Ovary (tissue), 10 donors: ENCODE measurements at regions of chr4 and their contacts with region 1.

Region 1: DNA sequence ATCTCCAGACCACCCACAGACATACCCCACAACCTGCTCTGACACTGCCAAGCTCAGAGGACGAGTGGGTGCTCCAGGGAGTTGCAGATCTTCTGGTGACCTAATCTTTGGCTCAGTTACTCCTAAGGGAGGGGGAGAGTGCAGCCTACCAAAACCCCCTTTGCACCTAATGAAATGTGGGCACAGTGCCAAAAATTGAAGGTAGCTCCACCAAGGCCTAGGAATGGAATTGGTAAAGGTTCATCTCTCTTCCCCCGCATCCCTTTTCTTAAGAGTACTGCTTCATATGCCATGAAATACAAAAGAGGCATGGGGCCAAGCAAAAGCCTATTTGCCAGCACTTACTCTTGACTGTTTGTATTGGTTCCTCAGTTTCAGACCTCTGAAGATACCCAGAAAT is 491.0 kb downstream of the NAF1 start:
- DNase-seq: no peak
- H3K4me3 ChIP-seq: no peak overlapping the region
- H3K27ac ChIP-seq: no peak overlapping the region
- H3K4me1 ChIP-seq: no peaks in the 10 kb centered on the region
- H3K27me3 ChIP-seq: no peaks in the 10 kb centered on the region
- CTCF ChIP-seq: no peak
- EP300 ChIP-seq: no peak
- POLR2A ChIP-seq: no peak

Region 2: DNA sequence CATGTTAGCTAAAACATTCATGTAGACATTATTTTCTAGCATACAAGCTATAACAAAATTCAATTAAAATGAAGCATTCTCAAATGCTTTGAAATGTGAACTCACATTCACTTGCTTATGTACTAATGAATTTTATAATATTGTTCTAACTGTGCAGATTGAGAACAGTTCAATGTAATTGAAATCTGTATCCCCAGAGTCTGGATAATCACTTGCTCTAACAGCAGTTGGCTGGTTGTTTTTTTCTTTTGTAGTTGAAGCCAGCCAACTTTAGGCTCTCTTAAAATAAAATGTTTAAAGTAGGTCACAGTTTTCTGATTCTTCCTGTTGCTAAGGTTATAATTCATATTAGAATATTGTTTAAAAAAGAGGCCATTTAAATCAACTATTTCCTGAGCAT is 52.1 kb after region 1 on chr4:
- intact Hi-C with region 1: loop called in 1 of 4 experiments (anchors 2 kb)
- DNase-seq: no peak
- H3K4me3 ChIP-seq: no peak overlapping the region
- H3K27ac ChIP-seq: no peak overlapping the region
- H3K4me1 ChIP-seq: no peaks in the 10 kb centered on the region
- H3K27me3 ChIP-seq: no peaks in the 10 kb centered on the region
- CTCF ChIP-seq: no peak
- EP300 ChIP-seq: no peak
- POLR2A ChIP-seq: no peak

Region 3: DNA sequence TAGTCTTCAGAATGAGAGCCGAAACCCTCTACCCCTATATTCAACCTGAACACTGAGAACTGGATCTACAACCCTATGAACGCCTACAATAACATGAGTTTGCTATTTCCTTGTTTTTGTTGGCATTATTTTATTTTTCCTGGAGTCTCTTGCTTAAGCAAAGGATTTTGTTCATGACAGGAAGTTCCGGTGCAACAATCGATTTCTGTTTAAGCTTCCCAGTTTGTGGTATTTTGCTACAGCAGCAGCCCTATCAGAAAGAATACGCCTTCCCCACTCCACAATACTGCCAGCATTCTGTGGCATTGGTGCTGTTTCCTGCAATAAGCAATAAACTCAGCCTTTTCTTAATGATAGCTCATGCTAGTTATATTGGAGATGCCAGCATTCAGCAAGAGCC is 728.9 kb after region 1 on chr4:
- intact Hi-C with region 1: no loop called
- DNase-seq: no peak
- H3K4me3 ChIP-seq: no peak overlapping the region
- H3K27ac ChIP-seq: no peak overlapping the region
- H3K4me1 ChIP-seq: no peaks in the 10 kb centered on the region
- H3K27me3 ChIP-seq: no peaks in the 10 kb centered on the region
- CTCF ChIP-seq: no peak
- EP300 ChIP-seq: no peak
- POLR2A ChIP-seq: no peak